ENCODE measurements at regions of chr6 and their contacts with region 1.

Region 1: DNA sequence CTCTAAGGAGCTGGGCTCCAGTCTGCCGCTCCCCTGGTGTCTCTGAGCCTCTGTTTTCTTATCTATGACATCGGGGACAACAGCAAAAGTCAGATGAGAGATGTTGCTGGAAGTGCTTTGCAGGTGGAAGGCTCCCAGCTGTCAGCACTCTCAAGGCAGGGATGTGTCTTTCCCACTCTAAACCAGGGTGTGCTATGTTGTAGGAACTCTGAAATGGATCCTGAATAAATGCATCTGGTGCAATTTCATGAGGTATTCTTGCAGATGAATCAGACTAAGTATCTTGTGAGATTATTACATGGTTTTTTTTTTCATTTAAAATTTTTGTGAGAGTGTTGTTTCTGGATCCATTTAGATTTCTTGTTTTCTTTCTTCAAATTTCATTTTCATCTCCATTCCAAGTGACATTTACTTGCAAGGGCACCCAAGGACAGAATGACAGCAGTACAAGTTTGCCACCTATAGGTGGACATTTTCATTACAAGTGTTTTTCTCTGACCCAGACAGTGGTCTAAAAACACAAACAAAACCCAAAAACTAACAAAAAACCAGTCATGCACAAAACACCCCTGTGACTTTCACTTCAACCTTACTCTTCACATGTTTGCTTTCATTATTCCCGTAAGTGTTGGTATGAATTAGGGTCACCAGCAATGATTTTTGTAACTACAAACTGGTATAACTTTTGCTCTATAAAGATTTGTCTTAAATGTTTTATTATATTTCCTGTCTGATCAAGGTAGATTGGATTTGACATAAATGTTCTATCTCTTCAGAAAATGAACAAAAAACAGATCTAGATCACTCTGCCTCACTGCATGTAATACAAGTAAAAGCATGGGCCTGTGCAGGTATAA is 14.7 kb upstream of the SIM1 start:
- DNase-seq: no peak
- ATAC-seq: peak in 1 of 2 donors; percentile 38

Region 2: GRCh38 chr6:99501762-99502161 is 977.6 kb before region 1 on chr6:
- intact Hi-C with region 1: no loop called
- DNase-seq: no peak
- ATAC-seq: no peak

Region 3: DNA sequence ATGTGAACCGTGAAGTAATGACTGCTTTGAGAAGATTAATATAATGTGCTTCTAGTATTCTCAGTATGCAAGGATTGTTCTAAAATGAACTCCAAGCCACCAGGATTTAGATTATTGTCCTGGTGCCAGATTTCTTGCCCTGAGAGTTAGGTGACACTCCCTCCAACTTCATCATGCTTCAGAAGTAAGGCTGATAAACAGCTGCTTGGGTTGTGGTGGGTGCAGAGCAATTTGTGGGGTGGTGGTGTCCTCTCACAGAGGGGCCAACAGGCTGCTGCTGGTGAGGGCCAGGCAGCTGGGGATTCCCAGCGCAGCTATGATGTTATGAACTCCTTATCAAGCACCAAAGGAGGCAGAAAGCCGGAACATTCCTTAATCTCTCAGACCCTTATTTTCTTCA is 600.0 kb before region 1 on chr6:
- intact Hi-C with region 1: loop called in 1 of 2 experiments (anchors 10 kb)
- DNase-seq: no peak
- ATAC-seq: no peak

Region 4: GRCh38 chr6:100001915-100002388 is 477.5 kb before region 1 on chr6:
- intact Hi-C with region 1: loop called in 1 of 2 experiments (anchors 10 kb)
- DNase-seq: peak; percentile 29
- ATAC-seq: peak; percentile 53 to 75

Region 5: DNA sequence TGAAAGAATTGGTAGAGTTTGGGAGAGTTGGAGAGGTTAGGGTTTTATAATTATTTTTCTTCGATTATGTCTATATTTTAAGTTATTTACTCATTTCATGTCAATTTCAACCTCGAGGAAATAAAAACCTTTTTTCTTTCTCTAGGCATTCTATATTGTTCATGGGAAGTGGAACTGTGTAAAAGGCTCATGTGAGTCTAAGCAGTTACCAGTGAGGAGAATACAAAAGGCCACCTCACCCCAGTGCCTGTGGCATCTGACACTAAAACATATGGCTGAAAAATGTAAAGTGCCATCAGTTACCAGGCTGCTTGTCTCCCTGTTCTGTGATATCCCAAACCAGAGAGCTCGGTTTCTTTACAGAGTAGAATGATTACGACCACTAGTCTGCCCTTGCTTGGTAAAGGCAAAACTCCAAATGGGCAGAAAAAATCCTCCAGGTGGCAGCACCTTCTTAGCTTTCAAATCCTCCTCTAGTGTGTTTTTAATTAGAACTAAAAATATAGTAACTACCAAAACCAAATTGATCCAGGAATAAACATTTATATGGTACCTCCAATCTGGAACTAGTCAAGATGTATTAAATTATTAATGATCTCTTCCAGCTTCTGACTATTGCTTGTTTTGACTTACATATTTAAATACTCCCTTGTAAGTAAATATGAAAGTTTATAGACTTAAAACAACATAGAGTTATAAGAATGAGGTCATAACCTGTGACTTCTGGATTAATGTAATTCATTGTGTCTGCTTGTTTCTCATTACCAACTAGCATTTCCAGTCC is 362.8 kb before region 1 on chr6:
- intact Hi-C with region 1: loop called (anchors 5 to 10 kb)
- DNase-seq: no peak
- ATAC-seq: peak; percentile 47 to 59

Region 6: GRCh38 chr6:101125380-101125971 is 646.1 kb after region 1 on chr6:
- intact Hi-C with region 1: no loop called
- DNase-seq: no peak
- ATAC-seq: no peak